Heart left ventricle (tissue), 16 donors: ENCODE measurements at regions of chr2 and their contacts with region 1.

Region 1: GRCh38 chr2:102806250-102806837 is 44.5 kb downstream of the TMEM182 start:
- DNase-seq: peak in 4 of 5 donors; percentile 63 to 71 (median 68)
- ATAC-seq: peak; percentile 8 to 61 (median 56)
- H3K4me3 ChIP-seq: no peak overlapping the region
- H3K27ac ChIP-seq: peak overlapping the region in 9 of 12 donors; percentile 19 to 62 (median 47)
- H3K4me1 ChIP-seq: peaks cover 0 to 50% (median 18%) of the 10 kb centered on the region in 12 donors
- H3K27me3 ChIP-seq: no peaks in the 10 kb centered on the region
- CTCF ChIP-seq: peak; percentile 65 to 85 (median 77)
- POLR2A ChIP-seq: no peak

Region 2: GRCh38 chr2:102753563-102754159 is 52.7 kb before region 1 on chr2:
- intact Hi-C with region 1: loop called (anchors 1 to 2 kb)
- DNase-seq: no peak
- ATAC-seq: peak in 2 of 4 donors; percentile 52 to 64
- H3K4me3 ChIP-seq: no peak overlapping the region
- H3K27ac ChIP-seq: no peak overlapping the region
- H3K4me1 ChIP-seq: peaks cover 0 to 12% (median 0%) of the 10 kb centered on the region in 12 donors
- H3K27me3 ChIP-seq: no peaks in the 10 kb centered on the region
- CTCF ChIP-seq: peak; percentile 68 to 87 (median 80)
- POLR2A ChIP-seq: no peak

Region 3: GRCh38 chr2:102761763-102762162 is 44.6 kb before region 1 on chr2 and contains the start of gene TMEM182:
- intact Hi-C with region 1: loop called in 4 of 10 experiments (anchors 2 kb)
- DNase-seq: peak; percentile 68 to 80 (median 73)
- ATAC-seq: peak; percentile 88 to 95 (median 92)
- H3K4me3 ChIP-seq: peak within 1 kb of the TSS; percentile 2 to 60 (median 46)
- H3K27ac ChIP-seq: peak within 1 kb of the TSS; percentile 26 to 81 (median 72)
- H3K4me1 ChIP-seq: peaks cover 0 to 35% (median 0%) of the 10 kb centered on the region in 12 donors
- H3K27me3 ChIP-seq: no peaks in the 10 kb centered on the region
- CTCF ChIP-seq: no peak
- POLR2A ChIP-seq: peak in 1 of 2 donors; percentile 26
- total RNA-seq, gene TMEM182: 68.7 to 179 (median 149) TPM

Region 4: GRCh38 chr2:102788885-102789260 is 17.5 kb before region 1 on chr2:
- intact Hi-C with region 1: loop called in 1 of 10 experiments (anchors 2 kb)
- DNase-seq: peak; percentile 59 to 84 (median 73)
- ATAC-seq: peak; percentile 96 to 98 (median 96)
- H3K4me3 ChIP-seq: no peak overlapping the region
- H3K27ac ChIP-seq: peak overlapping the region; percentile 52 to 93 (median 84)
- H3K4me1 ChIP-seq: peaks cover 0 to 86% (median 23%) of the 10 kb centered on the region in 12 donors
- H3K27me3 ChIP-seq: no peaks in the 10 kb centered on the region
- CTCF ChIP-seq: no peak
- POLR2A ChIP-seq: no peak